Activated B cell treated with CpG ODN at 0.5 μM for 24 hours (primary cell): ENCODE measurements at regions of chr11 and their contacts with region 1.

Region 1: GRCh38 chr11:65329944-65330403 is 3.7 kb upstream of the DPF2 start:
- DNase-seq: peak; percentile 56
- ATAC-seq: peak; percentile 43
- H3K4me3 Mint-ChIP-seq: peak overlapping the region; percentile 78
- H3K27ac Mint-ChIP-seq: peak overlapping the region; percentile 96
- H3K4me1 Mint-ChIP-seq: peaks cover 24% of the 10 kb centered on the region
- H3K27me3 Mint-ChIP-seq: no peaks in the 10 kb centered on the region
- CTCF ChIP-seq: no peak

Region 2: GRCh38 chr11:65159012-65159411 is 171.0 kb before region 1 on chr11:
- CTCF ChIA-PET with region 1: no interaction called
- POLR2A ChIA-PET with region 1: no interaction called
- intact Hi-C with region 1: no loop called
- DNase-seq: no peak
- ATAC-seq: peak; percentile 34
- H3K4me3 Mint-ChIP-seq: no peak overlapping the region
- H3K27ac Mint-ChIP-seq: no peak overlapping the region
- H3K4me1 Mint-ChIP-seq: peaks cover 7% of the 10 kb centered on the region
- H3K27me3 Mint-ChIP-seq: no peaks in the 10 kb centered on the region
- CTCF ChIP-seq: no peak

Region 3: GRCh38 chr11:65225279-65226102 is 104.5 kb before region 1 on chr11:
- CTCF ChIA-PET with region 1: interaction called, 28 read pairs
- POLR2A ChIA-PET with region 1: no interaction called
- intact Hi-C with region 1: loop called (anchors 1 kb)
- DNase-seq: peak; percentile 49
- ATAC-seq: peak; percentile 89
- H3K4me3 Mint-ChIP-seq: peak overlapping the region; percentile 83
- H3K27ac Mint-ChIP-seq: peak overlapping the region; percentile 24
- H3K4me1 Mint-ChIP-seq: peaks cover 17% of the 10 kb centered on the region
- H3K27me3 Mint-ChIP-seq: no peaks in the 10 kb centered on the region
- CTCF ChIP-seq: no peak

Region 4: GRCh38 chr11:65274735-65275682 is 55.0 kb before region 1 on chr11:
- CTCF ChIA-PET with region 1: interaction called, 71 read pairs
- POLR2A ChIA-PET with region 1: interaction called, 15 read pairs
- intact Hi-C with region 1: loop called (anchors 1 kb)
- DNase-seq: no peak
- ATAC-seq: peak; percentile 40
- H3K4me3 Mint-ChIP-seq: no peak overlapping the region
- H3K27ac Mint-ChIP-seq: no peak overlapping the region
- H3K4me1 Mint-ChIP-seq: peaks cover 5% of the 10 kb centered on the region
- H3K27me3 Mint-ChIP-seq: no peaks in the 10 kb centered on the region
- CTCF ChIP-seq: no peak

Region 5: GRCh38 chr11:65354265-65355012 is 24.5 kb after region 1 on chr11 and contains the start of gene TIGD3:
- CTCF ChIA-PET with region 1: interaction called, 9 read pairs
- POLR2A ChIA-PET with region 1: interaction called, 16 read pairs
- intact Hi-C with region 1: loop called (anchors 1 kb)
- DNase-seq: peak; percentile 96
- ATAC-seq: peak; percentile 97
- H3K4me3 Mint-ChIP-seq: peak within 1 kb of the TSS; percentile 91
- H3K27ac Mint-ChIP-seq: peak within 1 kb of the TSS; percentile 83
- H3K4me1 Mint-ChIP-seq: peaks cover 23% of the 10 kb centered on the region
- H3K27me3 Mint-ChIP-seq: no peaks in the 10 kb centered on the region
- CTCF ChIP-seq: no peak
- total RNA-seq, gene TIGD3: 1.4 and 1.6 TPM in 2 replicates

Region 6: GRCh38 chr11:65506770-65507505 is 177.0 kb after region 1 on chr11:
- CTCF ChIA-PET with region 1: interaction called, 7 read pairs
- POLR2A ChIA-PET with region 1: interaction called, 11 read pairs
- intact Hi-C with region 1: no loop called
- DNase-seq: no peak
- ATAC-seq: peak; percentile 49
- H3K4me3 Mint-ChIP-seq: no peak overlapping the region
- H3K27ac Mint-ChIP-seq: peak overlapping the region; percentile 84
- H3K4me1 Mint-ChIP-seq: peaks cover 62% of the 10 kb centered on the region
- H3K27me3 Mint-ChIP-seq: no peaks in the 10 kb centered on the region
- CTCF ChIP-seq: no peak